Right ventricle myocardium superior (tissue), 1 donor: ENCODE measurements at regions of chr7 and their contacts with region 1.

Region 1: DNA sequence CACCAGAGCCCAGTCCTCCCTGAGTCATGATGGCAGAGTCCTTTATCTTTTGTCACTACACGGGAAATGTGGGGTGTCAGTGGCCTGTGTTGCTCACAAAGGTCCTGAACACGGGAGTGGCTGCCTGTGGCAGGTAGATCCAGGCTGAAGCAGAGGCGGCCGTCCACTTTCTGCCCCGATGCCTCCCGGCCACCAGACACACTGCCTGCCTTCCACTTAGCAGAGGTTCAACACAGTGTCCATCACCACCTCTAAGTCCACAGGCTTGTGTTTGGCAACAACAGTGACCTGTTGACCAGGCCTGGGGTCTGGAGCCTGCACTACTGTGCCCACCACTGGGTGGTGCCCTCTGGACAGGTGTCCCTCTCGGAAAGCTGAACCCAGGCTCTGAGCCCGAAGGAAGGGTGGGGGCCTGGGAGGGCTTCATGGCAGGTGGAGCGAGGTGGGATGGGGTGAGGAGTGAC is 49.9 kb upstream of the CAMK2B start:
- DNase-seq: no peak
- ATAC-seq: peak; percentile 67

Region 2: GRCh38 chr7:44275957-44276410 is 99.3 kb before region 1 on chr7:
- intact Hi-C with region 1: no loop called
- DNase-seq: peak; percentile 32
- ATAC-seq: no peak

Region 3: DNA sequence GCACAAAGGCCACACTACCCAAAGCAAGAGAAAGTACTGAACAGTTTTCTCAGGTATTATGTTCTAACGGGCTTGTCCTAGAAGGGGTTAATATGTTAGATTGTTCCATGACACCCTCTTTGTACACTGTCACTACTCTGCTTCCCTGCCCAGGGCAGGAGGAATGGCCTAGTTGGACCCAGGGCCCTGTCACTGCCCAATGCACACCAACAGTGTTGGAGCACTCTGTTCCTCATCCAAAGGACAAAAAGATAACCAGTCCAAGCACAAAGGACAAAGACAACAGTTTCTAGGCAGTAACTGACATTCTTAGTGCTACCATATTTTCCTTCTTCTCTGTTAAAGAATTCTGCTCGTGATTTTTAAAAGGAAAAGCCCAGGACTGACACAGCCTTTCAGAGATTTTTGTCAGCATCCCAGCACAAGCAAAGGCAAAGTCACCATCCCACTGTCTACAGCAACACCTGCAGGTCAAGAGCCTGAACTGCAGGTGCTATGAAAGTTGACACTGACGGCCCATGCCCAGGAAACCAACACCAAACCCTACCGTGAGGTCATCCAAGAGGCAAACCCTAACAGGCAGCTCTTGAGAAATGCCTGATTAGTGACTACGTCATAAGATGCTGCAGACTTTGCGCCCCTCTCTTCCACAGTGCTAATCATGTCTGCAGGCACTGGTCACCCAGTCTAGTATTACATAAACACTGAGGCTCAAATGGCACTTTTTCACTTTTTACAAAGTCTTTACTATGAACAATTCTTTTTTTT is 102.0 kb after region 1 on chr7:
- intact Hi-C with region 1: loop called (anchors 10 kb)
- DNase-seq: peak; percentile 55
- ATAC-seq: peak; percentile 88

Region 4: GRCh38 chr7:44565097-44565794 is 190.0 kb after region 1 on chr7:
- intact Hi-C with region 1: loop called (anchors 10 kb)
- DNase-seq: peak; percentile 83
- ATAC-seq: peak; percentile 91